ENCODE measurements at regions of chr9 and their contacts with region 1.

Region 1: GRCh38 chr9:29456940-29457339 is 1883.7 kb upstream of the C9orf72 start:
- DNase-seq: no peak
- H3K4me3 ChIP-seq: no peak overlapping the region
- H3K27ac ChIP-seq: no peak overlapping the region
- H3K4me1 ChIP-seq: no peaks in the 10 kb centered on the region
- H3K27me3 ChIP-seq: no peaks in the 10 kb centered on the region
- CTCF ChIP-seq: no peak
- POLR2A ChIP-seq: no peak

Region 2: GRCh38 chr9:28810375-28811075 is 646.4 kb before region 1 on chr9:
- CTCF ChIA-PET with region 1: no interaction called
- POLR2A ChIA-PET with region 1: no interaction called
- dilution Hi-C with region 1: no loop called
- intact Hi-C with region 1: loop called (anchors 10 kb)
- DNase-seq: no peak
- H3K4me3 ChIP-seq: no peak overlapping the region
- H3K27ac ChIP-seq: no peak overlapping the region
- H3K4me1 ChIP-seq: no peaks in the 10 kb centered on the region
- H3K27me3 ChIP-seq: no peaks in the 10 kb centered on the region
- CTCF ChIP-seq: no peak
- POLR2A ChIP-seq: no peak